ENCODE measurements at regions of chr19 and their contacts with region 1.

Region 1: DNA sequence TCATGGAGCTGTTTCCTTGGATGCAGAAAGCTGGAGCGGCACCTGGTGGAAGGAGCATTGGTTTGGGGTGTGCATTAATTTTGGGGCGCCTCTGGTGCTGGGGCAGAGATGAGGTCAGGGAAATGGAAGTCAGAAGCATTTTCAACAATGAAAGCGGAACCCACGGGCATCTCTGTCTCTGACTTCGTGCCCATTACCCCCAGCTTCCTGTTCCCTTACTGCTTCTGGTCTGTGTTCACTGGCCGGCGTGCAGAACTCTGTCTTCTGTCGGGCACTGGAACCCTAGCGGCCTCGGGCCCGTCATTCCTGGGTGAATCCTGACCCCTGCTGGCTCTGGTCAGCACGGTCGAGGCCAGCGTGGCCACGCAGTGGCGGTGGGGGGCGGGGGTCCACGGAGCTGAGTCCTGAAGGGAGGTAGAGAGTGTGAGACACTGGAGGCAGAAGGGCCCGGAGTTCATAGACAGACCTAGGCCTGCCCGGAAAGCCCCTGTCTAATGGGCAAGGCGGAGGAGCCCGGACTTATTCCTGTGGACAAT is 7.9 kb upstream of the LINGO3 start:
- DNase-seq: peak in 3 of 4 experiments; percentile 43 to 69 (median 66)
- ATAC-seq: peak; percentile 89
- H3K4me3 ChIP-seq: no peak overlapping the region
- H3K27ac ChIP-seq: no peak overlapping the region
- H3K4me1 ChIP-seq: peaks cover 3 to 33% of the 10 kb centered on the region in 2 experiments; a peak in 3 of 5 replicates
- H3K27me3 ChIP-seq: no peaks in the 10 kb centered on the region
- CTCF ChIP-seq: peak; percentile 57 to 79 (median 76)
- EP300 ChIP-seq: no peak
- POLR2A ChIP-seq: no peak
- RAD21 ChIP-seq: peak; percentile 64 to 87

Region 2: GRCh38 chr19:2157452-2157851 is 158.4 kb before region 1 on chr19:
- CTCF ChIA-PET with region 1: no interaction called
- POLR2A ChIA-PET with region 1: no interaction called
- in situ Hi-C with region 1: loop called (anchors 5 kb)
- intact Hi-C with region 1: loop called (anchors 2 kb)
- DNase-seq: no peak
- ATAC-seq: no peak
- H3K4me3 ChIP-seq: no peak overlapping the region
- H3K27ac ChIP-seq: no peak overlapping the region
- H3K4me1 ChIP-seq: peaks cover 16 to 27% of the 10 kb centered on the region in 2 experiments; a peak in 4 of 5 replicates
- H3K27me3 ChIP-seq: no peaks in the 10 kb centered on the region
- CTCF ChIP-seq: no peak
- EP300 ChIP-seq: no peak
- POLR2A ChIP-seq: no peak
- RAD21 ChIP-seq: no peak

Region 3: DNA sequence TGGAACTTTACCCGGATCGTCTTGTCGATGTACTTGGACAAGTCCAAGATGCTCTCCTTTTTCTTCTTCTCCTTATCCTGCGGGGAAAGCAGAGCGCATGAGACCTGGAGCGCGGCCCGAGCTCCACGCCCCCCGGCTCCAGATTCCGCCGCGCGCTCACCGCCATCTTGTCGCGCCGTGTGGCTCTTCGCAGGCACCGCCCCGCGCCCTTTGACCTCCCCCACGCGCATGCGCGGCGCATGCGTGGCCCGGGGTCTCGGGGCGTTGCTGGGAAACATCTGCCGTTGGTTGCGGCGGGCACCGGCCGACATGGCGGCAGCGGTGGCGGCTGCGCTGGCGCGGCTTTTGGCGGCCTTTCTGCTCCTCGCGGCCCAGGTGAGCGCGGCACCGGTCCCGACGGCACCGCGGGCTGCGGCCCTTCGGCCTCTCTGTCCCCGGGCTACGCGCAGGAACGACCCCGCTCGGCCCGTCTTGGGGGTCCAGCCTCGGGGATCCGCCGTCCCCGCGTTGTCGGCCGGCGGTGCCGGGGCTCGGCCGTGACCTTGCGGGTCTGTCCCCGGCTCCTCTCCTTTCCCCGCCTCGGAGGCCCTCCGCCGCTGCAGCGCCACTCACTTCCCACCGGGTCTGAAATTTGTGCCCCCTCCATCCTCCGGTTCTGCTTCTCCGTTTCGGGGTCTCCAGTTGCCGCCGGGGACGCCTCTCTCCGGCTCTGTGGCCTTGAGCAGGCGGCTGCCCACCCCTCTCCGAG is 12.7 kb after region 1 on chr19 and contains the starts of genes LSM7 and SPPL2B:
- CTCF ChIA-PET with region 1: interaction called, 4 read pairs
- POLR2A ChIA-PET with region 1: interaction called, 13 read pairs
- in situ Hi-C with region 1: no loop called
- intact Hi-C with region 1: no loop called
- DNase-seq: peak; percentile 95 to 99 (median 97)
- ATAC-seq: peak; percentile 86
- H3K4me3 ChIP-seq: peak within 1 kb of the TSS; percentile 98
- H3K27ac ChIP-seq: peak within 1 kb of the TSS; percentile 74
- H3K4me1 ChIP-seq: peaks cover 28 to 73% of the 10 kb centered on the region in 2 experiments; a peak in 4 of 5 replicates
- H3K27me3 ChIP-seq: no peaks in the 10 kb centered on the region
- CTCF ChIP-seq: no peak
- EP300 ChIP-seq: no peak
- POLR2A ChIP-seq: peak; percentile 91
- RAD21 ChIP-seq: peak in 1 of 2 experiments; percentile 3; a peak in 1 of 4 replicates
- polyA plus RNA-seq, gene LSM7: 40.5 to 147 TPM
- polyA plus RNA-seq, gene SPPL2B: 0.20 to 0.29 TPM

Region 4: DNA sequence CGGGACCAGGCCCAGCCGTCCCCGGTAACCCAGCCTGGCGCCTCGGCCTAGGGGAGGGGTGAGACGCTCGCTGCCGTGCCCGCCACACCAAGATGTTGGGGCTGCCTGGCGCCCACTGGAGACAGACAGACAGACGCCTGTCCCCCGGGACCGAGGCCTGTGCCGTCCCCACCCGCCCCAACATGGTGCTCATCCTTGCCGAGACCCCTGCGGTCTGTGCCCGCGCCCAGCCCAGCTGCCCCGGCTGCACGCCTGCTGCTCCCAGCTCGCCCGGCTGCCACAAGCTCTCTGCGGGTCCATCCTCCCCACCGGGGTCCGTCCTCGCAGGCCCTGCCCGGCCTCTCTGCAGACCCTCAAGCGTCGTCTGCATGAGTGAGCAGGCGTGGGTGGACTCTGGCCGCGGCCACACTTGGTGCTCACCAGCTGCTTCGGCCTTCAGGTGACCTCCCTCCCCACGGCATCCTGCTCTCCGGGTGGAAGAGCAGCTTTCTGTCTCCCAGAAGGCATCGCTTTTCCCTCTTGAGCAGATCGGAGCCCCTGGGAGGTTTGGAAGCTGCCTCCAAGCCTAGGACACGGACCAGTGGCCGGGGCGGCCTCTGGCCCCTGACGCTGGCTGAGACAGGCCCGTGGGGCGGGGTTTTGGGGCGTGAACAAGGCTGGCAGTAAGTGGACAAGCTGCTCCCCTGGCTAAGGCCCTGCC is 37.4 kb after region 1 on chr19:
- CTCF ChIA-PET with region 1: no interaction called
- POLR2A ChIA-PET with region 1: no interaction called
- in situ Hi-C with region 1: no loop called
- intact Hi-C with region 1: no loop called
- DNase-seq: no peak
- ATAC-seq: no peak
- H3K4me3 ChIP-seq: no peak overlapping the region
- H3K27ac ChIP-seq: no peak overlapping the region
- H3K4me1 ChIP-seq: peaks cover 0 to 32% of the 10 kb centered on the region in 2 experiments; a peak in 2 of 5 replicates
- H3K27me3 ChIP-seq: peaks cover 1 to 4% of the 10 kb centered on the region in 2 experiments; a peak in 3 of 5 replicates
- CTCF ChIP-seq: no peak
- EP300 ChIP-seq: no peak
- POLR2A ChIP-seq: no peak
- RAD21 ChIP-seq: no peak